Naive thymus-derived CD4-positive, alpha-beta T cell (primary cell): ENCODE measurements at regions of chr14 and their contacts with region 1.

Region 1: DNA sequence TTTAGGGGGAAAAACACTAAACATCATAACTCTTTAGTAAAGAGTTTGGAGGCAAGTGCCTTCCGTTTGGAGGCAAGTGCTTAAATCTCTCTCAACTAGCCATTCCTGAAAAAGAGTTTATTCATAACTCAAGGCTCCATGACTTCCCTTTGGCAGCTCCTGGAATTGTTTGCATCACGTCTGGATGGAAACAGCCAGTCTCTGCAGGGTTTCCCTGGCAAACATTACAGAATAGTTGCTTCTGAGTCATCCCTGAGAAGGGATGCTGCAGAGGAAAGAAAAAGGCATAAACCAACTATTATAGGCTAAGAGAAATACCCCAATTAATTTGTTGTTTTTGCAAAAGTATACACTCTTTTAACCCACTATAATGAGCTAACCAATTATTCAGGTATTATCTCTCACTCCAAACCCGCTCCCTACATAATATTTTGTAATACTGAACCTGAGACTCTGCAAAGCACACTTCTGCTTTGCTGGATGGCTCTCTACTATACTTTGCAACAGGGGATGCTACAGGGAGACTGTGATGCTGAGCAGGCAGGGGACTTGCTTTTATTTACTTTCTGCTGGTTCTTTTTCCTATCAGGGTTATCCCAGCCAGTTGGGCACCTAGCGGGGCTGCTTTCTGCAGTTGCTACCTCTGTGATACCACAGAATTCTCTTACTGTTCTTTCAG is 497.7 kb downstream of the FUT8 start:
- DNase-seq: no peak
- ATAC-seq: no peak
- H3K4me3 ChIP-seq: no peak overlapping the region
- H3K4me3 Mint-ChIP-seq: no peak overlapping the region
- H3K27ac ChIP-seq: no peak overlapping the region
- H3K27ac Mint-ChIP-seq: peak overlapping the region in 1 of 9 donors; percentile 15
- H3K4me1 ChIP-seq: peaks cover 0 to 8% of the 10 kb centered on the region in 2 donors
- H3K4me1 Mint-ChIP-seq: peaks cover 14 to 64% (median 56%) of the 10 kb centered on the region in 7 donors
- H3K27me3 ChIP-seq: no peaks in the 10 kb centered on the region
- H3K27me3 Mint-ChIP-seq: peaks cover 0 to 24% (median 0%) of the 10 kb centered on the region in 5 donors

Region 2: DNA sequence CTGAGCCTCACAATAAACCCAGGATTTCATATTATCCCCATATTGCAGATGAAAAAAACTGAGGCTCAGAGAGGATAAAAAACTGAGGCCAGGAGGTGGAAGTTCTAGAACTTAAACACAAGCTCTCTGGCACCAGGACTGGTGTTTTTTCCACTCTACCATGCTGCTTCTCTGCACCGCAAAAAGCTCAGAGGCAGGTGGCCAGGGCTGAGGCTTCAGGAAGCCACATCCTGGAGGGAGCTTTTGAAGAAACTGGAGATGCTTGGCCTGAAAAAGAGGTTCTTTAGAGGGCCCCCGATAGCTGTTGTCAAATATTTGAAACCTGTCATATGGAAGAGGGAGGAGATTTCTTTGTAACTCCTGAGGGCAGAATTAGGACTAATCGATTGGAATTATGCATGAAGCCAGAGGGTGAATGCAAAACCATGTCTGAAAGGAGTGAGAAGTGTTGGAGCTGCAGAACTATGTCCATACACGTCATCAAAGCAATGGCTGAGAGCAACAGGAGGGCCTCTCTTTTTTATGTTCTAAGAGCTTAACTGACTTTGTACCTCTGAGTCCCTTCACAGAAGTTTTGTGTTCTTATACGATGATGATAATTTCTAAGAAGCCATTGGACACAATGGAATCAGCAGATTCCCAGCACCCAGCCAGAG is 49.2 kb before region 1 on chr14:
- CTCF ChIA-PET with region 1: no interaction called
- POLR2A ChIA-PET with region 1: interaction called, 3 read pairs
- intact Hi-C with region 1: loop called in 1 of 2 experiments (anchors 5 kb)
- DNase-seq: peak in 7 of 9 donors; percentile 22 to 64 (median 49)
- ATAC-seq: peak; percentile 62
- H3K4me3 ChIP-seq: no peak overlapping the region
- H3K4me3 Mint-ChIP-seq: peak overlapping the region; percentile 12 to 78 (median 61)
- H3K27ac ChIP-seq: no peak overlapping the region
- H3K27ac Mint-ChIP-seq: peak overlapping the region; percentile 69 to 85 (median 78)
- H3K4me1 ChIP-seq: peaks cover 18 to 53% of the 10 kb centered on the region in 2 donors
- H3K4me1 Mint-ChIP-seq: peaks cover 41 to 73% (median 66%) of the 10 kb centered on the region in 7 donors
- H3K27me3 ChIP-seq: no peaks in the 10 kb centered on the region
- H3K27me3 Mint-ChIP-seq: peaks cover 0 to 1% (median 0%) of the 10 kb centered on the region in 5 donors

Region 3: GRCh38 chr14:65900164-65900563 is 10.1 kb before region 1 on chr14:
- CTCF ChIA-PET with region 1: no interaction called
- POLR2A ChIA-PET with region 1: interaction called, 3 read pairs
- intact Hi-C with region 1: loop called in 1 of 2 experiments (anchors 2 kb)
- DNase-seq: no peak
- ATAC-seq: no peak
- H3K4me3 ChIP-seq: no peak overlapping the region
- H3K4me3 Mint-ChIP-seq: no peak overlapping the region
- H3K27ac ChIP-seq: no peak overlapping the region
- H3K27ac Mint-ChIP-seq: peak overlapping the region in 1 of 9 donors; percentile 3
- H3K4me1 ChIP-seq: no peaks in the 10 kb centered on the region
- H3K4me1 Mint-ChIP-seq: peaks cover 4 to 21% (median 11%) of the 10 kb centered on the region in 7 donors
- H3K27me3 ChIP-seq: no peaks in the 10 kb centered on the region
- H3K27me3 Mint-ChIP-seq: peaks cover 0 to 9% (median 0%) of the 10 kb centered on the region in 5 donors